OCI-LY7 (cell line): ENCODE measurements at regions of chr11 and their contacts with region 1.

Region 1: GRCh38 chr11:695538-696248 is at the start of gene TMEM80:
- DNase-seq: peak; percentile 99
- H3K4me3 ChIP-seq: peak within 1 kb of the TSS; percentile 83
- H3K27ac ChIP-seq: peak within 1 kb of the TSS; percentile 88
- H3K4me1 ChIP-seq: peaks cover 37% of the 10 kb centered on the region
- CTCF ChIP-seq: no peak
- total RNA-seq, gene TMEM80: 52.8 and 56.8 TPM in 2 replicates

Region 2: GRCh38 chr11:680476-680875 is 15.2 kb before region 1 on chr11:
- CTCF ChIA-PET with region 1: interaction called, 15 read pairs
- POLR2A ChIA-PET with region 1: no interaction called
- intact Hi-C with region 1: no loop called
- DNase-seq: no peak
- H3K4me3 ChIP-seq: no peak overlapping the region
- H3K27ac ChIP-seq: no peak overlapping the region
- H3K4me1 ChIP-seq: no peaks in the 10 kb centered on the region
- CTCF ChIP-seq: no peak

Region 3: GRCh38 chr11:910589-911195 is 215.0 kb after region 1 on chr11 and contains the start of gene CHID1:
- CTCF ChIA-PET with region 1: no interaction called
- POLR2A ChIA-PET with region 1: no interaction called
- intact Hi-C with region 1: no loop called
- DNase-seq: peak; percentile 89
- H3K4me3 ChIP-seq: peak within 1 kb of the TSS; percentile 88
- H3K27ac ChIP-seq: peak within 1 kb of the TSS; percentile 44
- H3K4me1 ChIP-seq: peaks cover 35% of the 10 kb centered on the region
- CTCF ChIP-seq: no peak
- total RNA-seq, gene CHID1: 30.6 and 39.4 TPM in 2 replicates